CD4-positive, alpha-beta T cell (primary cell): ENCODE measurements at regions of chr1 and their contacts with region 1.

Region 1: GRCh38 chr1:167454894-167455785 is 63.2 kb downstream of the CD247 start:
- DNase-seq: peak; percentile 70 to 93 (median 80)
- ATAC-seq: peak; percentile 69
- H3K4me3 ChIP-seq: peak overlapping the region; percentile 76
- H3K4me3 Mint-ChIP-seq: peak overlapping the region; percentile 94
- H3K27ac ChIP-seq: peak overlapping the region; percentile 93 to 98
- H3K27ac Mint-ChIP-seq: peak overlapping the region; percentile 100
- H3K4me1 ChIP-seq: peaks cover 88% of the 10 kb centered on the region
- H3K4me1 Mint-ChIP-seq: peaks cover 82% of the 10 kb centered on the region
- H3K27me3 ChIP-seq: no peaks in the 10 kb centered on the region
- H3K27me3 Mint-ChIP-seq: no peaks in the 10 kb centered on the region
- CTCF ChIP-seq: no peak

Region 2: GRCh38 chr1:167442124-167442848 is 12.9 kb before region 1 on chr1:
- CTCF ChIA-PET with region 1: interaction called, 9 read pairs
- POLR2A ChIA-PET with region 1: interaction called, 36 read pairs
- intact Hi-C with region 1: loop called in 1 of 2 experiments (anchors 1 kb)
- DNase-seq: peak; percentile 79 to 92 (median 88)
- ATAC-seq: peak; percentile 84
- H3K4me3 ChIP-seq: no peak overlapping the region
- H3K4me3 Mint-ChIP-seq: peak overlapping the region; percentile 45
- H3K27ac ChIP-seq: peak overlapping the region in 1 of 2 donors; percentile 41
- H3K27ac Mint-ChIP-seq: peak overlapping the region; percentile 100
- H3K4me1 ChIP-seq: peaks cover 91% of the 10 kb centered on the region
- H3K4me1 Mint-ChIP-seq: peaks cover 89% of the 10 kb centered on the region
- H3K27me3 ChIP-seq: no peaks in the 10 kb centered on the region
- H3K27me3 Mint-ChIP-seq: no peaks in the 10 kb centered on the region
- CTCF ChIP-seq: peak; percentile 86

Region 3: DNA sequence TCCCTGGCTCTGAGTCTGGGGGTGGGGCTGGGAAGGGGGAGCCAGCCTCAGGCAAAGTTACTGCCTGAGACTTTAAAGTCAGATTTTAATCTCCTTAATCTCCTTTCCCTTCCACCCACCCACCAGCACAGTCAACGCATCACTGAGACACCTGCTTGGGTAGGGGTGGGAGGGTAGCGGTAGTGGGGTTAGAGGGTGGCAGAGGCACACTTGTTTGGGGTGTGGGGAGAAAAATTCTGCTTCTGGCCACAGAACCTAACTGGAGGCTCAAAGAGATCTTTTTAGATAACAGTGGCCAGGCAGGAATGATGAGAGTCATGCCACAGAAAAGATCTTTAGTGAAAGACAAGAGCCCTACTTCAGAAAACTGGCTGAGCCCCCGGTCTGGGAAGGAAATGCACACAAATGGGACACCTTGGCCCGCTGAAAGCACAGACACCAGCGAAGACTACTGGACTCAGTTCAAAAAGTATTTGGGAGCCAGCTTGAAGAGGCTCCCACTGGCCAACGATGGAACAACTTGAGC is 19.1 kb after region 1 on chr1:
- CTCF ChIA-PET with region 1: interaction called, 3 read pairs
- POLR2A ChIA-PET with region 1: interaction called, 117 read pairs
- intact Hi-C with region 1: loop called in 1 of 2 experiments (anchors 2 kb)
- DNase-seq: peak in 8 of 14 experiments; percentile 40 to 80 (median 58)
- ATAC-seq: peak; percentile 84
- H3K4me3 ChIP-seq: peak overlapping the region; percentile 36
- H3K4me3 Mint-ChIP-seq: peak overlapping the region; percentile 78
- H3K27ac ChIP-seq: peak overlapping the region; percentile 67
- H3K27ac Mint-ChIP-seq: peak overlapping the region; percentile 100
- H3K4me1 ChIP-seq: peaks cover 74% of the 10 kb centered on the region
- H3K4me1 Mint-ChIP-seq: peaks cover 100% of the 10 kb centered on the region
- H3K27me3 ChIP-seq: no peaks in the 10 kb centered on the region
- H3K27me3 Mint-ChIP-seq: no peaks in the 10 kb centered on the region
- CTCF ChIP-seq: no peak

Region 4: GRCh38 chr1:167491586-167492461 is 36.7 kb after region 1 on chr1:
- CTCF ChIA-PET with region 1: interaction called, 7 read pairs
- POLR2A ChIA-PET with region 1: interaction called, 13 read pairs
- intact Hi-C with region 1: loop called (anchors 2 to 5 kb)
- DNase-seq: peak in 3 of 14 experiments; percentile 61 to 72 (median 71)
- ATAC-seq: peak; percentile 35
- H3K4me3 ChIP-seq: peak overlapping the region; percentile 32
- H3K4me3 Mint-ChIP-seq: peak overlapping the region; percentile 74
- H3K27ac ChIP-seq: peak overlapping the region; percentile 76 to 89
- H3K27ac Mint-ChIP-seq: peak overlapping the region; percentile 100
- H3K4me1 ChIP-seq: peaks cover 98% of the 10 kb centered on the region
- H3K4me1 Mint-ChIP-seq: peaks cover 99% of the 10 kb centered on the region
- H3K27me3 ChIP-seq: no peaks in the 10 kb centered on the region
- H3K27me3 Mint-ChIP-seq: no peaks in the 10 kb centered on the region
- CTCF ChIP-seq: no peak

Region 5: DNA sequence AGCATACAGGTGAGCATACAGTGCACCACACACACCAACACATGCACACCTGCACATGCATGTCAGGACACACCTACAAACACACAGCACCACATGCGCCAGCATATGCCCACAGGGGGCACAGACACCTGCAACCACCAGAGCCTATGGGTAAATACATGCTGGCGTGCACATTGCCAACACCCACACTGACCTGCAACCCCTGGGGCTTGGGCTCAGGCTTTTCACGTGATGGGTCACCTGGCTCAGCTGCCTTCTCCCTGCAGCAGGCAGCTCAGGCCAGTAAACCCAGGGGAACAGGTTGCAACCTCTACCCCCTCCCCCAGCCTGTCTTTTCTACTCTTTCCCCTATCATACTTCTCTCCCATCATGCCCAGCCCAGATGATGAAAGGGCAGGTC is 55.1 kb after region 1 on chr1:
- CTCF ChIA-PET with region 1: interaction called, 4 read pairs
- POLR2A ChIA-PET with region 1: interaction called, 202 read pairs
- intact Hi-C with region 1: loop called in 1 of 2 experiments (anchors 1 kb)
- DNase-seq: peak in 2 of 14 experiments; percentile 45 to 48
- ATAC-seq: peak; percentile 27
- H3K4me3 ChIP-seq: peak overlapping the region; percentile 89
- H3K4me3 Mint-ChIP-seq: peak overlapping the region; percentile 87
- H3K27ac ChIP-seq: peak overlapping the region; percentile 27 to 72
- H3K27ac Mint-ChIP-seq: peak overlapping the region; percentile 100
- H3K4me1 ChIP-seq: peaks cover 85% of the 10 kb centered on the region
- H3K4me1 Mint-ChIP-seq: peaks cover 89% of the 10 kb centered on the region
- H3K27me3 ChIP-seq: no peaks in the 10 kb centered on the region
- H3K27me3 Mint-ChIP-seq: no peaks in the 10 kb centered on the region
- CTCF ChIP-seq: no peak

Region 6: GRCh38 chr1:167627865-167628641 is 172.9 kb after region 1 on chr1:
- CTCF ChIA-PET with region 1: interaction called, 3 read pairs
- POLR2A ChIA-PET with region 1: no interaction called
- intact Hi-C with region 1: loop called in 1 of 2 experiments (anchors 5 kb)
- DNase-seq: peak; percentile 47 to 92 (median 71)
- ATAC-seq: peak; percentile 78
- H3K4me3 ChIP-seq: peak overlapping the region; percentile 97
- H3K4me3 Mint-ChIP-seq: peak overlapping the region; percentile 94
- H3K27ac ChIP-seq: peak overlapping the region; percentile 71 to 90
- H3K27ac Mint-ChIP-seq: peak overlapping the region; percentile 93
- H3K4me1 ChIP-seq: peaks cover 54% of the 10 kb centered on the region
- H3K4me1 Mint-ChIP-seq: peaks cover 81% of the 10 kb centered on the region
- H3K27me3 ChIP-seq: no peaks in the 10 kb centered on the region
- H3K27me3 Mint-ChIP-seq: no peaks in the 10 kb centered on the region
- CTCF ChIP-seq: no peak